Thyroid gland (tissue), 4 donors: ENCODE measurements at regions of chr18 and their contacts with region 1.

Region 1: GRCh38 chr18:9136315-9137155 is at the start of gene ANKRD12:
- DNase-seq: peak; percentile 98
- H3K4me3 ChIP-seq: peak within 1 kb of the TSS; percentile 71 to 74 (median 74)
- H3K27ac ChIP-seq: peak within 1 kb of the TSS; percentile 98
- H3K4me1 ChIP-seq: peaks cover 40% of the 10 kb centered on the region in 2 donors
- H3K27me3 ChIP-seq: no peaks in the 10 kb centered on the region
- CTCF ChIP-seq: peak in 1 of 6 experiments; percentile 2
- POLR2A ChIP-seq: peak; percentile 88 to 93
- total RNA-seq, gene ANKRD12: 74.6 to 155 (median 109) TPM

Region 2: GRCh38 chr18:8882632-8883408 is 253.7 kb before region 1 on chr18:
- intact Hi-C with region 1: no loop called
- DNase-seq: peak in 1 of 2 donors; percentile 1
- H3K4me3 ChIP-seq: no peak overlapping the region
- H3K27ac ChIP-seq: no peak overlapping the region
- H3K4me1 ChIP-seq: no peaks in the 10 kb centered on the region
- H3K27me3 ChIP-seq: no peaks in the 10 kb centered on the region
- CTCF ChIP-seq: no peak
- POLR2A ChIP-seq: no peak

Region 3: DNA sequence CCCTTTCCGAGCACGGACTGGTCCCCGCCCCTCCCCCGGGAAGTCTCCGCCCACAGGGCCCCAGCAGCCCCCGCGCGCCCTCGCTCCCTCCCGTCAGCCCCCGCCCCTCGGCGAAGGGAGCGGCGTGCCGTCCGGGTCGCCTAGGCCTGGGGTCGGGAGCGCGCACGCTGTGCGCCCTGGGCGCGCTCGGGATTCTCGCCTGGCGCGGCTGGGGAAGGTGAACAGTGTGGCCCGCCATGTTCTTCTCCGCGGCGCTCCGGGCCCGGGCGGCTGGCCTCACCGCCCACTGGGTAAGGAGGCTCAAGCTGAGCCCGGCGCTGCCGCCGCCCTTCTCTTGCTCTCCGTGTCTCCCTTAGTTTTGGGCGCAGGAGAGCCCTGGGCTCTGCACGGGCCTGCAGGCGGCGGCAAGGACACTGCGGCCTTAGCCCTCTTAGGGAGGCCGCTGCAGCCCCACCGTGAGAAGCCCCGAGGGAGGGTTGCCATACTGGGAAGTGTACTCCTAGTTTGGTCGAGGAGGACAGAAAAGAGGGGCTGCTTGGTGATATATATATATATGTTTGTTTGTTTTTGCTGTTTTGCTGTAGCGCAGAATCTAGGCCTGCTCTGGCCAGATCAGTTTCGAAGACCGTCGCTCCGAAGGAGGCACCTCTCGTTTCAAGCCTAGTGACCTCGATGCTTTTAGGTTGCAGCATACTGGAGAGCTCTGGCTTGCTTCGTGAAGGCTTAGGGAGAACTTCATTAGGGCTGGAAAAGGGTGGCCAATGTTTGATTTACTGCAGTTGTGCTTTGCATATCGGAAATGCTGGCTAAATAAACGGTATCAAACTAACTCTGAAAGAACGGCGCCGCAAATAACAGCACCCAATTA is 33.8 kb before region 1 on chr18 and contains the start of gene NDUFV2:
- intact Hi-C with region 1: loop called (anchors 2 kb)
- DNase-seq: peak; percentile 96 to 98
- H3K4me3 ChIP-seq: peak within 1 kb of the TSS; percentile 11 to 93 (median 65)
- H3K27ac ChIP-seq: peak within 1 kb of the TSS; percentile 96 to 98 (median 97)
- H3K4me1 ChIP-seq: peaks cover 32 to 41% of the 10 kb centered on the region in 2 donors
- H3K27me3 ChIP-seq: no peaks in the 10 kb centered on the region
- CTCF ChIP-seq: no peak
- POLR2A ChIP-seq: peak; percentile 90 to 96
- total RNA-seq, gene NDUFV2: 103 to 114 (median 108) TPM

Region 4: GRCh38 chr18:9188359-9189231 is 52.1 kb after region 1 on chr18:
- intact Hi-C with region 1: no loop called
- DNase-seq: peak; percentile 86 to 87
- H3K4me3 ChIP-seq: no peak overlapping the region
- H3K27ac ChIP-seq: peak overlapping the region; percentile 26 to 70 (median 64)
- H3K4me1 ChIP-seq: peaks cover 62 to 79% of the 10 kb centered on the region in 2 donors
- H3K27me3 ChIP-seq: no peaks in the 10 kb centered on the region
- CTCF ChIP-seq: no peak
- POLR2A ChIP-seq: no peak

Region 5: DNA sequence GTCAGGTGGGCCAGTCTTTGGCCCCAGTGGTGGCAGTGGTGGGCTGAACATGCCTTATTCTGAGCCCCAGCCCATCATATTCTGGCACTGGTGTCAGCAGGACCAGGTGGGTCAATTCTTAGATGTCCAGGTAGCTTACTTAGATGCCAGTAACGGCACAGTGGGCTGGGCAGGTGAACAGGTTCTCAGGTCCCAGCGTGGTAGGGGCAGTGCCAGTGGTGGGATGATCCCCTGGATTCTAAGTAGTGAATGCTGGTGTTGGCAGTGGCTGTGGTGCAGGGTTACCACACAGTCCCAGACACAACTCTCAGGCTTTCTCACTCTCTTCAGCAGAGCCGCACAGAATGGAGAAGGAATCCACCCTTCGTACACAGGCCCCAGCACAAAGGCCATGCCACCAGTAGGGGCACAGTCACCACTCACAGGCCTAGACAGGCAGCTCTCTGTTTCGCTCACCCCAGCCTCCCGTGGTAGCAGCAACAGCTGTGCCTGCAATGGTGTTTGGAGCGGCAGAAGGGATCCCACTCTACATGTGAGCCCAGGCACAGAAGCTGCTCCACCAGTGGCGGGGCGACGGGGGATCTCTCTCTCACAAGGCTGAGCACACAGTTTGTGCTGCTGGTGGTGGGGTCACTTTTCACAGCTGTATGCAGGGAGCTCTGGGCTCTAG is 97.4 kb after region 1 on chr18:
- intact Hi-C with region 1: no loop called
- DNase-seq: no peak
- H3K4me3 ChIP-seq: no peak overlapping the region
- H3K27ac ChIP-seq: no peak overlapping the region
- H3K4me1 ChIP-seq: peaks cover 0 to 4% of the 10 kb centered on the region in 2 donors
- H3K27me3 ChIP-seq: no peaks in the 10 kb centered on the region
- CTCF ChIP-seq: no peak
- POLR2A ChIP-seq: no peak

Region 6: DNA sequence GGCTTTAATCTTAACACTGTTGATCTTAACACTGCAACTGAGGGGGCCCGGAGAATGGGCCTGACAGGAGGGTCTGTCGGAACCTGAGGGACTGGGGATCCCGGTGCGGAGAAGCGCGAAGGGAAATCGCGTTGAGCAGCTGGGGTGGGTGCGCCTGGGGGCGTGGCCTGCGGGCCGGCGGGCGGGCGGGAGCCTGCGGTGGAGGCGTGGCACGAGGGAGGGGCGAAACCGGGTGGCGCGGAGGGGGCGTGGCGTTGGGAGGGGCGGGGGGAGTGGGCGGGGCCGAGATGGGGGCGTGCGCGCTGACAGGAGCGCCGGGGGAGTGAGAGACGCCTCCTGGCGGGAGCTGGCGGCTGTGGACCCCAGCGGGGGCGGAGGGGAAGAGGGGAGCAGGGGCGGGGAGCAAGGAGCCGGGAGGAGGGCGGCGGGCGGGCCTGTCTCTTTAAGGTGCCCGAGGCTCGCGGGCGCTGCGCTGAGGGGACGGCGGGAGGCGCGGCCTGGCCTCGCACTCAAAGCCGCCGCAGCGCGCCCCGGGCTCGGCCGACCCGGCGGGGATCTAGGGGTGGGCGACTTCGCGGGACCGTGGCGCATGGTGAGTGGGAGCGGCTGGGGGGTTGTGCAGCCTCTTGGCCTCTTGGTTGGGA is 197.9 kb after region 1 on chr18 and contains the start of gene TWSG1:
- intact Hi-C with region 1: loop called (anchors 10 kb)
- DNase-seq: peak; percentile 96
- H3K4me3 ChIP-seq: peak within 1 kb of the TSS; percentile 59 to 80 (median 66)
- H3K27ac ChIP-seq: peak within 1 kb of the TSS; percentile 70 to 82 (median 80)
- H3K4me1 ChIP-seq: peaks cover 7 to 15% of the 10 kb centered on the region in 2 donors
- H3K27me3 ChIP-seq: no peaks in the 10 kb centered on the region
- CTCF ChIP-seq: peak in 2 of 6 experiments; percentile 19 to 63
- POLR2A ChIP-seq: peak; percentile 43 to 80
- total RNA-seq, gene TWSG1: 53.0 to 62.9 (median 59.7) TPM

Region 7: GRCh38 chr18:9433671-9434121 is 297.2 kb after region 1 on chr18:
- intact Hi-C with region 1: no loop called
- DNase-seq: no peak
- H3K4me3 ChIP-seq: no peak overlapping the region
- H3K27ac ChIP-seq: no peak overlapping the region
- H3K4me1 ChIP-seq: no peaks in the 10 kb centered on the region
- H3K27me3 ChIP-seq: no peaks in the 10 kb centered on the region
- CTCF ChIP-seq: no peak
- POLR2A ChIP-seq: no peak